Natural killer cell (primary cell): ENCODE measurements at regions of chr19 and their contacts with region 1.

Region 1: GRCh38 chr19:51338563-51339312 is 3.2 kb downstream of the VSIG10L start:
- DNase-seq: peak; percentile 86 to 92
- ATAC-seq: peak; percentile 81 to 87 (median 82)
- H3K4me3 ChIP-seq: peak overlapping the region; percentile 47
- H3K4me3 Mint-ChIP-seq: peak overlapping the region; percentile 87
- H3K27ac ChIP-seq: no peak overlapping the region
- H3K27ac Mint-ChIP-seq: peak overlapping the region; percentile 14 to 87
- H3K4me1 ChIP-seq: peaks cover 23% of the 10 kb centered on the region
- H3K4me1 Mint-ChIP-seq: peaks cover 8 to 26% of the 10 kb centered on the region in 2 donors
- H3K27me3 ChIP-seq: no peaks in the 10 kb centered on the region
- H3K27me3 Mint-ChIP-seq: peaks cover 0 to 16% of the 10 kb centered on the region in 2 donors
- CTCF ChIP-seq: peak; percentile 95

Region 2: DNA sequence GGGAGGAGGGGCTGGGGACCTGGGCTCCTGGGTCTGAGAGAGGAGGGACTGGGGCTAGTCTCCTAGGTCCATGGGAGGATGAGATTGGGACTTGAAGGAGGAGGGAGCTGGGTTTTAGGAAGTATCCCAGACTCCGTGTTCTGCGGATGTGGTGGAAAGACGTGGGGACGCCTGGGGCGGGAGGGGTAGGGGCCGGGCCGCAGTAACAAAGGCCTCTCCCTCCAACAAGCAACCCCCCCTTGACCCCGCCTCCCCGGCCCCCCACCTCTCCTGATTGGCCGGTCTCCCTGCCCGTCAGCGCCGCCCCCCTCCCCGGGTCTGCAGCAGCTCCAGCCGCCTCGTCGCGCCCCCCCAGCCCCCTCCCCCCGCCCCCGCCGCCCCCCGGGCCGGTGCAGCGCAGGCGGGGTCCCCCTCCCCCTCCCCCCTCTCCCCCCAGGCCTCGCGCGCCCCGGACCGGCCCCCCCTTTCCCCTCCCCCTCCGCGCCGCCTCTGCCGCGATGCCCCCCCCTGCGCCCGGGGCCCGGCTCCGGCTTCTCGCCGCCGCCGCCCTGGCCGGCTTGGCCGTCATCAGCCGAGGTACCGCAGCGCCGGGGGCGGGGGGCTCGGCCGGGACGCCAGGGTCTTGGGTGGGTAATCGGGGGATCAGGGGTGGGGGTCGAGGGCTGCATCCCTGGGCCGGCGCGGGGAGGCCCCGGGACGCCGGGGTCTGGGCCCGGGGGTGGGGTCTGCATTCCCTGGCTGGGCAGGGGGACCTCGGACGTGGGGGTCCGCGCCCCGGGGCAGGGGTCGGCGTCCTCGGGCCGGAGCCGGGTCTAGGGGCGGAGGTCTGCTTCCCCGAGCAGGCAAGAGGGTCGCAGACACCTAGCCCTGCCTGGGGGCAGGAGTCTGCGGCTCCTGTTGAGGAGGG is 27.1 kb before region 1 on chr19 and contains the start of gene IGLON5:
- intact Hi-C with region 1: no loop called
- DNase-seq: no peak
- ATAC-seq: no peak
- H3K4me3 ChIP-seq: no peak within 1 kb of the TSS
- H3K4me3 Mint-ChIP-seq: no peak within 1 kb of the TSS
- H3K27ac ChIP-seq: no peak within 1 kb of the TSS
- H3K27ac Mint-ChIP-seq: no peak within 1 kb of the TSS
- H3K4me1 ChIP-seq: no peaks in the 10 kb centered on the region
- H3K4me1 Mint-ChIP-seq: no peaks in the 10 kb centered on the region
- H3K27me3 ChIP-seq: peaks cover 5% of the 10 kb centered on the region
- H3K27me3 Mint-ChIP-seq: peaks cover 49 to 64% of the 10 kb centered on the region in 2 donors
- CTCF ChIP-seq: no peak
- total RNA-seq, gene IGLON5: not detected

Region 3: DNA sequence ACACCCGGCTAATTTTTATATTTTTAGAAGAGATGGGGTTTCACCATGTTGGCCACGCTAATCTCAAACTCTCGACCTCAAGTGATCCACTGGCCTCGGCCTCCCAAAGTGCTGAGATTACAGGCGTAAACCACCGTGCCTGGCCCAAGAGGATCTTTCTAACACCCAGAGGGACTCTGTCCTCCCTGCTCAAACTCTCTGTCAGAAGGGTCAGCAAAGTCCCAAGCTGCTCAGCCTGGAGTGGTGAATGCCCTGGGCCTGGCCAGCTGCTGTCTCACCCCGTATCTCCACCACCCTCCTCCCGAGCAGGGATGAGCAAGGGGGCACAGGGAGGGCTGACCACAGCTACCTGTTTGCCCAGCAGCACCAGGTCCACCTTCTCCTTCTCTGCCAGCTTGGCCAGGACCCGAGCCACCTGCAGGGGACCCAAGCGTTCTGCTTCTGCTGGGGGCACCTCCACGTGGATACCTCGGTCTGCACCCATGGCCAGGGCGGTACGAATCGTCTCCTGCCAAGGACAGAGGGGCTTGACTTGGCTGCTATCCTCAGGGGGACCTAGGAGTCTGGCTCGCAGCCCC is 14.1 kb after region 1 on chr19:
- intact Hi-C with region 1: no loop called
- DNase-seq: no peak
- ATAC-seq: no peak
- H3K4me3 ChIP-seq: no peak overlapping the region
- H3K4me3 Mint-ChIP-seq: no peak overlapping the region
- H3K27ac ChIP-seq: no peak overlapping the region
- H3K27ac Mint-ChIP-seq: peak overlapping the region in 1 of 2 donors; percentile 51
- H3K4me1 ChIP-seq: no peaks in the 10 kb centered on the region
- H3K4me1 Mint-ChIP-seq: peaks cover 0 to 4% of the 10 kb centered on the region in 2 donors
- H3K27me3 ChIP-seq: no peaks in the 10 kb centered on the region
- H3K27me3 Mint-ChIP-seq: no peaks in the 10 kb centered on the region
- CTCF ChIP-seq: no peak

Region 4: DNA sequence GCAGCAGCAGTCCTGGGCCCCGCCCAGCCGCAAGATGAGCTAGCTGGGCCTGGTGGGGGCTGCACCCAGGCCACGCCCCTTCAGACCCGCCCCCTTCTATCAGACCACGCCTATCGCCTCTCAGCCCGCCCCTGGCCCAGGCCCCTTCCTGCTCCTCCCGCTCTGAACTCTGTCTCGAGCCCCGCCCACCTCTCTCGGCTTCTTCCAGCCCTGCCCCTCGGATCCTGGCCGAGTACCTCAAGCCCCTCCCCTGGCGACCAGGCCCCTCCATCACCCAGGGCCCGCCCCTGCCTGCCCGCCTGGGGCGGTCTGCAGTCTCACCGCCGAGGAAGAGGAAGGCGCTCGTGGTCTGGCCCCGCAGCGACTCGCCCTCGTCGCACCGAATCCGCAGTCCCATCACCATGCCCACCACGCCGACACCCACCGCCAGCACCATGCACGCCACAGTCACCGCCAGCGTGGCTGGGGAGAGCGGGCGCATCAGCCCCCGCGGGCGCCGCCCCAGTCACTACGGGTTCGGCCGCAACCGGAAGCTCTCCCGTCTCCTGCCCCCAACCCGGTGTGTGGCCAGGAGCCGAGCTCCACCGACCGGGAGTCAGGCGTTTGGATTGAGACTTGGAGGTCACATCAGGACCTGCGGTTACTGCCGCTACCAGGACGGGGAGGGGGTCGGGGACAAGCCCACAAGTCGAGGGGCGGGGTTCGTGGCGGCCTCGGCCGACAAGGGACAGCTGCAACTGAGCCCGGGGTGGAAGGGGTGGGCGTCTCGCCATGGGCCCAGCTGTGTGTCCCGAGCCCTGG is 29.0 kb after region 1 on chr19:
- intact Hi-C with region 1: loop called (anchors 2 kb)
- DNase-seq: peak; percentile 94 to 95
- ATAC-seq: peak; percentile 68 to 92 (median 69)
- H3K4me3 ChIP-seq: peak overlapping the region; percentile 95
- H3K4me3 Mint-ChIP-seq: peak overlapping the region; percentile 98
- H3K27ac ChIP-seq: peak overlapping the region; percentile 88
- H3K27ac Mint-ChIP-seq: peak overlapping the region; percentile 88 to 94
- H3K4me1 ChIP-seq: peaks cover 82% of the 10 kb centered on the region
- H3K4me1 Mint-ChIP-seq: peaks cover 54 to 80% of the 10 kb centered on the region in 2 donors
- H3K27me3 ChIP-seq: no peaks in the 10 kb centered on the region
- H3K27me3 Mint-ChIP-seq: no peaks in the 10 kb centered on the region
- CTCF ChIP-seq: no peak

Region 5: DNA sequence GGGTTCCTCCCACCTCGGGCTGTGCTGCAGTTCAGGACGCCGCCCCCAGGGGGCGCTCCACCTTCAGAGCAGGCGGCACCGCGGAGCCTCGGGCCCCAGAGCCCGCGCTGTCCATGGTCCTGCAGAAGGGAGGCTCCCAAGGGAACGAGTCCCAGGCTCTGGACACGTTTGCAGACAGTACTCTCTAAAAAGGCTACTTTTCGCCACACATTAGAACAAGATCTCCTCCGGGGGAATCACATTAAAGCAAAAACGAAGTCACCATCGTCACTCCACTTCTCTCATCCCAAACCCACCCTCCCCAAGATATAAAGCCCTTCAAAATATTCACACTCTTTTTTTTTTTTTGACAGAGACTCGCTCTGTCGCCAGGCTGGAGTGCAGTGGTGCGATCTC is 83.3 kb after region 1 on chr19:
- intact Hi-C with region 1: loop called (anchors 1 kb)
- DNase-seq: peak; percentile 89 to 92
- ATAC-seq: peak; percentile 94 to 98 (median 95)
- H3K4me3 ChIP-seq: no peak overlapping the region
- H3K4me3 Mint-ChIP-seq: peak overlapping the region; percentile 74
- H3K27ac ChIP-seq: no peak overlapping the region
- H3K27ac Mint-ChIP-seq: peak overlapping the region in 1 of 2 donors; percentile 38
- H3K4me1 ChIP-seq: peaks cover 34% of the 10 kb centered on the region
- H3K4me1 Mint-ChIP-seq: peaks cover 15 to 20% of the 10 kb centered on the region in 2 donors
- H3K27me3 ChIP-seq: peaks cover 5% of the 10 kb centered on the region
- H3K27me3 Mint-ChIP-seq: peaks cover 16 to 17% of the 10 kb centered on the region in 2 donors
- CTCF ChIP-seq: peak; percentile 99

Region 6: DNA sequence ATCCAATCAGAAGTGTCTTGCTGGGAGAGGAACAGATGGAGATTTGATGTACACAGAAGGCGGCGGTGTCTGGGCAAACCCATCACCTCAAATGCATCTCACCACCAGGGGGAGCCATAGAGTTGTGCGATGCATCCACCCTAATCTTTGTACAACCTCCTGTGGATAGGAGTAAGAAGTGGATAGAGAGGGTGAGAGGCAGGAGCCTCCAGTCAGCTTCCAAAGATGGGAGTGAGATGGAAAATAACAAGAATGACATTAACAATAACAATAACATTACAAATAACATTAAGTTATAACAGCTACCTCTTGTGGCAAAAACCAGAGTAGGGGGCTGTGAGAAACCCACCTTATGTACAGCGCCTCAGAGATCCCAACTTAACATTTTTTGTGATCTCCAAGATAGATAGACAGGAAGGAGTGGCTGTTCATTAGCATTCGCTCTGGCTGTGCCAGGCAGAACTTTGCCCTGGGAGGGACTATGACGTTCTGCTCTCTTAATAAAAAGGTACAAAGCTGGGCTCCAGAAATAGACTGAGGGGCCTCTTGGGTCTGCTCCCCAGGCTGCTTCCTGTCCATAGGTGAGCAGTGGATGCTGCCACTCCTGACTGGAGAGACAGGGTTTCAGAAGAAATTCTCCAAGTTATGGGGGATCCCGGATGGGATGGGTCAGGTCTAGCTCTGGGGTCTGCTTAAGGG is 134.4 kb after region 1 on chr19:
- intact Hi-C with region 1: loop called (anchors 1 kb)
- DNase-seq: peak; percentile 75 to 89
- ATAC-seq: peak; percentile 84 to 90 (median 85)
- H3K4me3 ChIP-seq: no peak overlapping the region
- H3K4me3 Mint-ChIP-seq: no peak overlapping the region
- H3K27ac ChIP-seq: no peak overlapping the region
- H3K27ac Mint-ChIP-seq: no peak overlapping the region
- H3K4me1 ChIP-seq: no peaks in the 10 kb centered on the region
- H3K4me1 Mint-ChIP-seq: peaks cover 0 to 7% of the 10 kb centered on the region in 2 donors
- H3K27me3 ChIP-seq: no peaks in the 10 kb centered on the region
- H3K27me3 Mint-ChIP-seq: peaks cover 16 to 32% of the 10 kb centered on the region in 2 donors
- CTCF ChIP-seq: peak; percentile 99

Region 7: DNA sequence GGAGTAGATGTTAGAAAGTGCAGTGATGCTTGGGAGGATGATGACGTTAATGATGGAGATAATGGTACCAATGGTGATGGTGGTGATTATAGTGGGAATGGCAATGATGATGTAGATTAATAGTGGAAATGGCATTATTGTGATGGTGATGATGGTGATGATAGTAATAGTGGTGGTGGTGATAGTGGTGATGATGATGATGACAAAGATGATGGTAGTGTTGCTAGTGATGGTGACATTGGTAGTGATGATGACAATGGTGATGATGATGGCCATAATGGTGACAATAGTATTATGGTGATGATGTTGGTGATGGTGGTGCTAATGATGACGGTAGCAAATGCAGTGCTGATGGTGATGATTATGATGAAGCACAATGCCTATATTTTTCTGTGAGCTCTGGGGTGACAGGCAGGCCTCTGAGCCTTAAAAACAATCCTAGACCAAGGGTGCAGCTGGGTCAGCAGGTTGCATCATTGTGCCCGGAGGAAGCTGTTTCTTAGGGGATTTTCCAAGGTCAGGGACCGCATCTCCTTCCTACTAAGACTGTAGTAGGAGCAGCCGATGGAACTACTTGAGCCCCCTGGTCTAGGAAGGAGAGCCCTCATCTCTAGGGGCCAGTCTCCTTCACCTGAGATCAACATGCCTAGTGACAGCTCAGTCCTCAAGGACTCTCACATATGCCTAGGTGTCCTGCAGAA is 147.4 kb after region 1 on chr19:
- intact Hi-C with region 1: no loop called
- DNase-seq: no peak
- ATAC-seq: no peak
- H3K4me3 ChIP-seq: no peak overlapping the region
- H3K4me3 Mint-ChIP-seq: no peak overlapping the region
- H3K27ac ChIP-seq: no peak overlapping the region
- H3K27ac Mint-ChIP-seq: no peak overlapping the region
- H3K4me1 ChIP-seq: no peaks in the 10 kb centered on the region
- H3K4me1 Mint-ChIP-seq: no peaks in the 10 kb centered on the region
- H3K27me3 ChIP-seq: no peaks in the 10 kb centered on the region
- H3K27me3 Mint-ChIP-seq: peaks cover 10 to 25% of the 10 kb centered on the region in 2 donors
- CTCF ChIP-seq: no peak

Region 8: GRCh38 chr19:51660975-51661600 is 322.4 kb after region 1 on chr19:
- intact Hi-C with region 1: loop called (anchors 1 kb)
- DNase-seq: peak; percentile 31 to 66
- ATAC-seq: peak in 2 of 3 donors; percentile 47 to 64
- H3K4me3 ChIP-seq: no peak overlapping the region
- H3K4me3 Mint-ChIP-seq: no peak overlapping the region
- H3K27ac ChIP-seq: no peak overlapping the region
- H3K27ac Mint-ChIP-seq: no peak overlapping the region
- H3K4me1 ChIP-seq: no peaks in the 10 kb centered on the region
- H3K4me1 Mint-ChIP-seq: peaks cover 7% of the 10 kb centered on the region in 2 donors
- H3K27me3 ChIP-seq: peaks cover 1% of the 10 kb centered on the region
- H3K27me3 Mint-ChIP-seq: peaks cover 29 to 52% of the 10 kb centered on the region in 2 donors
- CTCF ChIP-seq: peak; percentile 33